HCT116 (cell line): ENCODE measurements at regions of chr6 and their contacts with region 1.

Region 1: GRCh38 chr6:128725271-128726233 is 157.4 kb upstream of the LAMA2 start:
- DNase-seq: peak; percentile 41
- ATAC-seq: no peak
- H3K4me3 ChIP-seq: no peak overlapping the region
- H3K27ac ChIP-seq: no peak overlapping the region
- H3K4me1 ChIP-seq: no peaks in the 10 kb centered on the region
- H3K27me3 ChIP-seq: no peaks in the 10 kb centered on the region
- CTCF ChIP-seq: peak; percentile 44 to 78 (median 58); a peak in 5 of 6 replicates
- POLR2A ChIP-seq: no peak
- RAD21 ChIP-seq: peak; percentile 60

Region 2: DNA sequence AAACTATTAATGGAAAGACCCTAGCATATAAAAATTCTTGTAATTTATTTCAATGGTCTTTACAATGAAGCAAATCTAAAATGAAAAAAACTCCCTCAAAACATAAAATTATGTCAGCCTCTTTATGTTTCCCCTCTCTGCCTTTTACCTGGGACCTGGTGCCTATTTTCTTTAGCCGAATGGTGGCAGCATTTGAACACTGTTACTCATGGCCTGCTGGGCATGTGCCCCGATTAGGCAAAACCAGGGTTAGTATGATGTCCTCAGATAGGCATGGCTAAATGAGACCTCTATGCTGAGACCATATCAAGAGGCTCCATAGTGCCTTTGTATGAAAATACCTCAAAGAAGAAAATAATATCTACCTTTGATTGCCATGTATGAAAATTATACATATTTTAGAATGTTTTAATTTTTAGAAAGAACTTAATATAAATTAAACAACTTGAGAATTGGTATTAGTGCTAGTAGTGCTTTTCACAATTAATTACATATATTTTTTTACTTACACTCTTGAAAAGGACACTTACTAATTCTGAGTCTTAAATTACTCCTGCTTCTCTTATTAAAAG is 1171.0 kb before region 1 on chr6:
- CTCF ChIA-PET with region 1: no interaction called
- POLR2A ChIA-PET with region 1: no interaction called
- RAD21 ChIA-PET with region 1: no interaction called
- intact Hi-C with region 1: loop called (anchors 10 kb)
- DNase-seq: peak; percentile 60
- ATAC-seq: peak; percentile 100
- H3K4me3 ChIP-seq: no peak overlapping the region
- H3K27ac ChIP-seq: no peak overlapping the region
- H3K4me1 ChIP-seq: no peaks in the 10 kb centered on the region
- H3K27me3 ChIP-seq: no peaks in the 10 kb centered on the region
- CTCF ChIP-seq: peak; percentile 60 to 73 (median 70); a peak in 5 of 6 replicates
- POLR2A ChIP-seq: no peak
- RAD21 ChIP-seq: peak; percentile 86

Region 3: GRCh38 chr6:127841811-127842210 is 883.7 kb before region 1 on chr6:
- CTCF ChIA-PET with region 1: no interaction called
- POLR2A ChIA-PET with region 1: no interaction called
- RAD21 ChIA-PET with region 1: no interaction called
- intact Hi-C with region 1: loop called (anchors 5 kb)
- DNase-seq: no peak
- ATAC-seq: no peak
- H3K4me3 ChIP-seq: no peak overlapping the region
- H3K27ac ChIP-seq: no peak overlapping the region
- H3K4me1 ChIP-seq: no peaks in the 10 kb centered on the region
- H3K27me3 ChIP-seq: no peaks in the 10 kb centered on the region
- CTCF ChIP-seq: no peak
- POLR2A ChIP-seq: no peak
- RAD21 ChIP-seq: no peak

Region 4: DNA sequence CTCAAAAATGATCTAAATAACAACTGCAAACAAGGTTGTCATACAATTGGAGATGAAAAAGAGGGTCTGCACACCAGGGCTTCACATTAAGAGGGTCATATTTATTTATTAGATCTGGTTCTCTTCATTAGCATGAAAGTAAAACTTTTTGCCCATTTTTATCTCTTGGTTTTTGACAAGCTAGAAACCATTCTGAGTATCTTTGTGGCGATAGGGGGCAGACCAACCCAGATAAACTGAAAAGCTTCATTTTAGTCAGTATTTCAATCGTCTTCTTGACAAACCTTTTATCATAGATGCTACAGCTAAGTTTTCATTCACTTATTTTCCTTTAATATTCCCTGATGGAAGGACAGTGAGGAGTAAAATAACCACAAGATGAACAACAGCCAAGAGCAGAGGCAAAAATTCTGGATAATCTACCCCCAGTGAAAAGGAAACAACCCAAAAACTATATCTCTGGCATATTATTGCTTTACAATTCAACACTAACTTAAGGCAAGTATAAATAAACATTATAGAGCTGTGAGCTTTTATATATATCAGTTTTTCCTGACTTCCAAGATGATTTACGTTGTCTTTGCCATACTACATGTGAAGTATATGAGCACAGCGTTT is 869.9 kb before region 1 on chr6:
- CTCF ChIA-PET with region 1: interaction called, 14 read pairs
- POLR2A ChIA-PET with region 1: no interaction called
- RAD21 ChIA-PET with region 1: interaction called in 1 of 2 experiments, 4 read pairs
- intact Hi-C with region 1: loop called (anchors 5 kb)
- DNase-seq: no peak
- ATAC-seq: no peak
- H3K4me3 ChIP-seq: no peak overlapping the region
- H3K27ac ChIP-seq: no peak overlapping the region
- H3K4me1 ChIP-seq: no peaks in the 10 kb centered on the region
- H3K27me3 ChIP-seq: no peaks in the 10 kb centered on the region
- CTCF ChIP-seq: peak; percentile 39 to 63 (median 45); a peak in 4 of 6 replicates
- POLR2A ChIP-seq: no peak
- RAD21 ChIP-seq: peak; percentile 68

Region 5: GRCh38 chr6:129251669-129252376 is 526.3 kb after region 1 on chr6:
- CTCF ChIA-PET with region 1: interaction called, 3 read pairs
- POLR2A ChIA-PET with region 1: interaction called, 3 read pairs
- RAD21 ChIA-PET with region 1: no interaction called
- intact Hi-C with region 1: loop called (anchors 1 kb)
- DNase-seq: peak; percentile 73
- ATAC-seq: peak; percentile 93
- H3K4me3 ChIP-seq: no peak overlapping the region
- H3K27ac ChIP-seq: no peak overlapping the region
- H3K4me1 ChIP-seq: peaks cover 3 to 10% of the 10 kb centered on the region in 2 experiments; a peak in 3 of 4 replicates
- H3K27me3 ChIP-seq: no peaks in the 10 kb centered on the region
- CTCF ChIP-seq: peak; percentile 64 to 87 (median 75); a peak in 5 of 6 replicates
- POLR2A ChIP-seq: no peak
- RAD21 ChIP-seq: peak; percentile 90

Region 6: DNA sequence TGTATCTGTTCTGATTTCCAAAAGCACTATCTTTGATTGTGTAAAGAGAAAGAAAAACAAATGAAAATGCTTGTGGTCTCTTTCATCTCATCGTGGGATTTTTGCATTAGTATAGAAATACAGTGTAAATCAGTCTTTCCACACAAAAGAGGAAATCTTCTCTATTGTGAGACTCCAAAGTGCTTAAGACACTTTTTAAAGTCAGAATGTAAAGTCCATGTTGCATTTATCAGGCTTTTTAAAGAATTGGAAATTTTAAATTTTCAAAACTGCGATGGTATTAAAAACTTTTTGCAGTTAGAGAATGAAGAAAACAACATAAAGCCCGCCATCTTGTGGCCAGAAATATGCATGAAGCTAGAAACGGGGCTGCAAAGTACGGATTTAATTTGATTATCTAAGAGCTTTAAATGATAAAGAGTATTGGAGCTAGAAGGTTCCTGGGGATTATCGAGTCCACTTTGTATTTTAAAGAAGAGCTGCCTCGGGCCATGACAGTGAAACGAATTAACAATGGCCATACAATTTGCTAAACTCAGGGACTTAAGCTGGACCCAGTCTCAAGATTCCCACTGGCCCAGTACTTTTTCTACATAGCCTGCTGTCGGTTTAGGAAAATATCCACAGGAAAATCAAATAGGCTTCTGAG is 644.8 kb after region 1 on chr6:
- CTCF ChIA-PET with region 1: interaction called, 6 read pairs
- POLR2A ChIA-PET with region 1: no interaction called
- RAD21 ChIA-PET with region 1: no interaction called
- intact Hi-C with region 1: loop called (anchors 5 kb)
- DNase-seq: peak; percentile 45
- ATAC-seq: peak; percentile 78
- H3K4me3 ChIP-seq: peak overlapping the region in 1 of 2 experiments; percentile 36; a peak in 2 of 4 replicates
- H3K27ac ChIP-seq: no peak overlapping the region
- H3K4me1 ChIP-seq: peaks cover 6 to 10% of the 10 kb centered on the region in 2 experiments; a peak in 2 of 4 replicates
- H3K27me3 ChIP-seq: no peaks in the 10 kb centered on the region
- CTCF ChIP-seq: peak; percentile 60 to 85 (median 63); a peak in 5 of 6 replicates
- POLR2A ChIP-seq: no peak
- RAD21 ChIP-seq: peak; percentile 82